Gastrocnemius medialis (tissue), 4 donors: ENCODE measurements at regions of chr10 and their contacts with region 1.

Region 1: DNA sequence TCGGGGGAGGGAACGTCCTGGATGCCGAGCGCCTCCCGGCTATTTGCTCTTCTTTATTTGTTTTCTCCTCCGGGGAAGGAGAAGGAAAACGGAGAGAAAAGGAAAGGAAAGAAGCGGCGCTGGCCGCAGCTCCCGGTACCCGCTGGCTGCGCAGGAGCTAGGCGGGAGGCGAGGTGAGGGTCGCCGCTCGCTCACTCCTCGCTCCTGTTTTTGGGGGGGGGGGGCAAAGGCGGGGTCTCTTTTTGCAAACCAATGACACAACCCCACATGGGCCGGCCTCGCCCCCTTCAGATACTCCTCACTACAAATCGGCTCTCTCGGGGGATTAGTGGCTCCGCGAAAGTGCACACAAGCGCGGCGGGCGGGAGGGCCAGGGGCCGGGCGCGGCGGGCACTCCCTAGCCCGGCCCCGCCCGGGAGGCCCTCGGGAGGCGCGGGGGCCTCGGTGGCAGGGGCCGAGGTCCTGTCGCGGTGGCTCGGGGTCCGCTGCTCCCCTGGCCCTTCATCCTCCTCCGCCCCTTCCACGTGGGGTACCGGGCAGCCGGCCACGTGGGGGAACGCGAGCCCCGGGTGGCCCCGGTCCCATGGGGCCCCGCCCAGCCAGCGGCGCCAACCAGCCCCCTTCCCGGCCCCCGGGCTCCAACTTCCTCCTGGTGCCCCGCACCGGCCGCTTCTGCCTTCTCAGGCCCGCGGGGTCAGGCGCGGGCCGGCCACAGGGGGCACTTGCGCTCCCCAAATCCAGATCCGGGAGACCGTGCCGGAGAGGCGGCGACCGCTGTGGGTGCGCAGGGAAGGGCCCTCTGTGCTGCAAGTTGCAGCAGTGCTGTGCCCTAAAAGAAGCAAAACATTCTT is 718 bp upstream of the CTBP2 start:
- DNase-seq: peak; percentile 63 to 73
- ATAC-seq: peak; percentile 32 to 48
- H3K4me3 ChIP-seq: peak overlapping the region; percentile 68 to 88 (median 84)
- H3K27ac ChIP-seq: peak overlapping the region; percentile 88 to 99 (median 97)
- H3K4me1 ChIP-seq: peaks cover 23 to 29% of the 10 kb centered on the region in 2 donors
- H3K27me3 ChIP-seq: no peaks in the 10 kb centered on the region
- CTCF ChIP-seq: peak; percentile 50 to 67 (median 56)
- POLR2A ChIP-seq: peak; percentile 67 to 81

Region 2: DNA sequence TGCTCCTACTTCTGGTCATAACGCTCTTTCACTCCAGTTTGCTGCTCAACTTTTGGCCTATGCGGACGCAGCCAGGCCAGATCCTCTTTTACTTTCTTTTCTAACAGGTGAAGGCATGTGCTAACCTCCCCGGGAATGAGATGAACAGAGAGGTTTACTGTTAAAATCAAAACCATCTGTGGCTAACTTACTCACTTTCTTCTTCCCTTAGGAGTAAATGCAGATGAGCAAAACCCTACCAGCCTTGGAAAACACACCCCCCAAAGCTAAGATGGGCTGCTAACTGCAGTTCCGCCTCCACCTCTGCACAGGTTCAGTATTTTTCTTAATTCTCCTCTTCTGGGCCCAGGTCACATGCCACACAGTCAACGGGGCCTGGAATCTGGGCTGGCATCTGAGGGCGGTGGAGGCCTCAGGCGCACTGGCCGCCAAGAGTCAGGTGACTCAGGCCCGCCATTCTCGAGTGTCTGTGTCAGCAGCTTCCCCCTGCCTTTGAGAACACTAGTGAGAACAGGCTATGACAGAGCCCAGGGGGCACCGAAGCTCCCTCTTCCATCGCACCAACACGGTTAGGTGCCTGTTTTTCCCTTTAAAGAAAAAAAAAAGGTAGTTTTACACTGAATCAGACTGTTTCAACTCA is 428.0 kb before region 1 on chr10:
- in situ Hi-C with region 1: no loop called
- intact Hi-C with region 1: loop called (anchors 10 kb)
- DNase-seq: peak; percentile 84 to 88
- ATAC-seq: peak; percentile 55 to 59
- H3K4me3 ChIP-seq: peak overlapping the region; percentile 6 to 36 (median 18)
- H3K27ac ChIP-seq: peak overlapping the region; percentile 92 to 97 (median 92)
- H3K4me1 ChIP-seq: peaks cover 100% of the 10 kb centered on the region in 2 donors
- H3K27me3 ChIP-seq: no peaks in the 10 kb centered on the region
- CTCF ChIP-seq: no peak
- POLR2A ChIP-seq: peak; percentile 58 to 83

Region 3: DNA sequence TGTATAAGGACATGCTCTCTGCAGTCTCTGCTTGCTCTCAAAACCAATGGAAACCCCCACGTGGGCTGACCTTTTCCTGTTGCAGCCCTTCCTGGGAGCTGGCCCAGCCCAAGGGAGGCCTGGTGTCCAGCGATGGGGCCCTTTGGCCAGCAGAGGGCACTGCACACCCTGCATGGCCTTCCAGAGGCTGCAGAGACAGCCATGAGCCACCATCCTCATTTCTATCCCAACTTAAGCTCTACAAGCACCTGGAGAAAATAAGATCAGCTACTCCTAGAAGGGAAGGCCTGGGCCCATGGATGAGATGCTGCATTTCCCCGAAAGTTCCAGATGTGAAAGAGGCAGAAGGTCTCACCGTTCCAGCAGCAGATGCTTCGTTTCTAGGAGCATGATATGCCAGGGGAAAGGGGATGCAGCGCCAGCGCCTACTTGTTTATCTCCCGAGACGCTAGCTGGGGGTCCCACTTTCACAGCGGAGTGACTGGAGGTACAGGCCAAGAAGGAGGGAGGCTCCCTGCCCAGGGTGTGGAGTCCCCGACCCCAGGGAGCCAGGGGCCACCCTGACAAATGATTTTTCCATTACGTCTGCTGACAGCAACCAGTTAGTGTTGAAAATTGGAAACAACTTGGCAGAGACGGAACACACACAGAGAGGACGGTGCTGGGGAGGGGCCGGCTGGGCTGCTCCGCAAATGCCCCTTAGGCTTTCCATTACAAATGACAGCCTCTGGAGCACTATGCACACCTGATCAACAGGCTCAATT is 112.8 kb before region 1 on chr10:
- in situ Hi-C with region 1: loop called in 3 of 4 experiments (anchors 10 kb)
- intact Hi-C with region 1: no loop called
- DNase-seq: peak; percentile 69 to 82
- ATAC-seq: peak; percentile 63 to 79
- H3K4me3 ChIP-seq: peak overlapping the region in 1 of 4 donors; percentile 2
- H3K27ac ChIP-seq: peak overlapping the region; percentile 15 to 69 (median 24)
- H3K4me1 ChIP-seq: peaks cover 71 to 91% of the 10 kb centered on the region in 2 donors
- H3K27me3 ChIP-seq: no peaks in the 10 kb centered on the region
- CTCF ChIP-seq: peak; percentile 95 to 98 (median 98)
- POLR2A ChIP-seq: no peak

Region 4: GRCh38 chr10:125084191-125084613 is 76.9 kb before region 1 on chr10:
- in situ Hi-C with region 1: loop called in 1 of 4 experiments (anchors 10 kb)
- intact Hi-C with region 1: no loop called
- DNase-seq: peak; percentile 75 to 88
- ATAC-seq: peak; percentile 67 to 74
- H3K4me3 ChIP-seq: peak overlapping the region in 1 of 4 donors; percentile 5
- H3K27ac ChIP-seq: peak overlapping the region; percentile 86 to 91 (median 89)
- H3K4me1 ChIP-seq: peaks cover 79 to 85% of the 10 kb centered on the region in 2 donors
- H3K27me3 ChIP-seq: no peaks in the 10 kb centered on the region
- CTCF ChIP-seq: peak in 4 of 5 experiments; percentile 4 to 33 (median 20)
- POLR2A ChIP-seq: peak in 1 of 2 donors; percentile 15

Region 5: DNA sequence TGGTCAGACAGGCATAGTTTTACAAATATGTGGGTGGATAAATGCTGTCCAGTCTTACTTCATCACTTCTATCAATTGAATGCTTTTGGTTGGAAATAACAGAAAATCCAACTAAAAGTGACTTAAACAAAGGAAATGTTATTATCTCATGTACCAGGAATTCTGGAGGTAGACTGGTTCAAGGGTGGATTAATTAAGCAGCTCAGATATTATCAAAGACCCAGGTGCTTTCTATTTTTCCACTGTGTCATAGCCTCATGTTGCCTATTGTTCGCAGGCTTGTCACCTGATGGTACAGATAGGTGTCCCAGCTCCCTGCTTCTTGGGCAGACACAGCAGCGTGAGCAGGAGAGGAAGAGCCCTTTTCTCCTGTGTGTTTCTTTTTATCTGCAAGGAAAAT is 155.4 kb after region 1 on chr10:
- in situ Hi-C with region 1: no loop called
- intact Hi-C with region 1: no loop called
- DNase-seq: no peak
- ATAC-seq: no peak
- H3K4me3 ChIP-seq: no peak overlapping the region
- H3K27ac ChIP-seq: no peak overlapping the region
- H3K4me1 ChIP-seq: no peaks in the 10 kb centered on the region
- H3K27me3 ChIP-seq: no peaks in the 10 kb centered on the region
- CTCF ChIP-seq: no peak
- POLR2A ChIP-seq: no peak

Region 6: DNA sequence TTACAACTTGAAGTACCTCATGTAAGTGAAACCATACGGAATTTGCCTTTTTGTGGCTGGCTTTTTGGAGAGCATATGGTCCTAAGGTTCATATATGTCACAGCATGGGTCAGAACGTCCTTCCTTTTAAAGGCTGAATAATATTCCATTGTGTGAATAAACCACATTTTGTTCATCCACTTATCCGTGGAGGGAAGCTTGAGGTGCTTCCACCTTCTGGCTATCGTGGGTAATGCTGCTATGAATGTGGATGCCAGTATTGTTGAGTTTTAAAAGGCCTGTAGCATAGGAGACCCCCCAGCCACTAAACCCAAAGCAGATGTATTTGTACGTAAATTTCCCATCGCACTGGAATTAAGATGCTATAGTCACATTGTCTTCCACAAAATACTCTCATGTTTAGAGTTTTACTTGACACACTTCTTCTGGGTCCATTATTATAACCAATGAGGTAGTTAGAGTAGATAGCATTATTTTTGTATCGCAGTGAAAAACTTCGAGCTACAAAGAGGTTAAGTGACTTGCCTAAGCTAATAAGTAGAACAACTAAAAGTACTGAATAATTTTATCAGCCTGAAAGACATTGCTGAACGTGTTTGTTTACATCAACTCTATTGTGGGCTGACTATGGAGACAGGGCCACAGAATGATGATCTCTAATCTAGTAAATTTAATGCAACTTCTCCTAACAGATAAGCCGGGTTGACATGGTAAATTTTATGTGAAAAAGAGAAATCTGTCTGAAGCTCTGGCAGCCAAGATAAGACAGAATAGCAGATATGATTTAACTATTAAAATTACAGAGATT is 182.2 kb after region 1 on chr10:
- in situ Hi-C with region 1: loop called in 2 of 4 experiments (anchors 10 kb)
- intact Hi-C with region 1: loop called (anchors 2 kb)
- DNase-seq: no peak
- ATAC-seq: peak; percentile 42 to 61
- H3K4me3 ChIP-seq: no peak overlapping the region
- H3K27ac ChIP-seq: no peak overlapping the region
- H3K4me1 ChIP-seq: no peaks in the 10 kb centered on the region
- H3K27me3 ChIP-seq: no peaks in the 10 kb centered on the region
- CTCF ChIP-seq: peak; percentile 43 to 73 (median 63)
- POLR2A ChIP-seq: no peak

Region 7: DNA sequence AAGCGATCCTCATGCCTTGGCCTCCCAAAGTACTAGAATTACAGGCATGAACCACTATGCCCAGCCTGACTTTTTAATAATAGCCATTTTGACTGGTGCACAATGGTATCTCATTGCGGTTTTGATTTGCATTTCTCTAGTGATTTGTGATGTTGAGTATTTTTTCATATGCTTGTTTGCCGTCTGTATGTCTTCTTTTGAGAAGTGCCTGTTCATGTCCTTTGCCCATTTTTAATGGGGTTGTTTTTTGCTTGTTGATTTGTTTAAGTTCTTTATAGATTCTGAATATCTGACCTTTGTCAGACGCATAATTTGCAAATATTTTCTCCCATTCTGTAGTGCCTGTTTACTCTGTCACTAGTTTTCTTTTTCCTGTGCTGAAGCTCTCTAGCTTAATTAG is 218.5 kb after region 1 on chr10:
- in situ Hi-C with region 1: no loop called
- intact Hi-C with region 1: no loop called
- DNase-seq: no peak
- ATAC-seq: no peak
- H3K4me3 ChIP-seq: no peak overlapping the region
- H3K27ac ChIP-seq: no peak overlapping the region
- H3K4me1 ChIP-seq: no peaks in the 10 kb centered on the region
- H3K27me3 ChIP-seq: peaks cover 0 to 4% (median 0%) of the 10 kb centered on the region in 3 donors
- CTCF ChIP-seq: no peak
- POLR2A ChIP-seq: no peak